ENCODE measurements at regions of chr3 and their contacts with region 1.

Region 1: DNA sequence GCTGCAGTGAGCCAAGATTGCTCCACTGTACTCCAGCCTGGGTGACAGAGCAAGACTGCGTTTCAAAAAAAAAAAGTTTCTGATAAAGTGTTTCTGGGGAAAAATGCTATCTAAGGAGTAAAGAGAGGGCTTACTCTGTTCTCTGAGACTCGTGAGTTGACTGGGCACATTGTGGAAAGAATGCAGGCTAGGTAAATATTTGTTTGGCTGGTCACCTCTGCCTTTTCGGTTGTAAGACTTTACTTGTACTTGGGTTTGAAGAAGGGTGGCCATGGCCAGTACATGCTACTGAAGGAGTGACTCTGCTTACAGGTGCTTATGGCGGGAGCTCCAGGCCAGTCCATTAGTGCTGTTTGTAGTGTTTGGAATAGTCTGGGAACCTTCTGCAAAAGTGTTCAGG is 68.7 kb downstream of the RUBCN start:
- DNase-seq: no peak
- H3K4me3 Mint-ChIP-seq: no peak overlapping the region
- H3K27ac Mint-ChIP-seq: no peak overlapping the region
- H3K4me1 Mint-ChIP-seq: no peaks in the 10 kb centered on the region
- H3K27me3 Mint-ChIP-seq: no peaks in the 10 kb centered on the region

Region 2: GRCh38 chr3:197599089-197599765 is 68.8 kb before region 1 on chr3:
- intact Hi-C with region 1: loop called (anchors 2 kb)
- DNase-seq: peak; percentile 94
- H3K4me3 Mint-ChIP-seq: no peak overlapping the region
- H3K27ac Mint-ChIP-seq: peak overlapping the region; percentile 66
- H3K4me1 Mint-ChIP-seq: peaks cover 14% of the 10 kb centered on the region
- H3K27me3 Mint-ChIP-seq: no peaks in the 10 kb centered on the region

Region 3: GRCh38 chr3:197613199-197613598 is 54.8 kb before region 1 on chr3:
- intact Hi-C with region 1: no loop called
- DNase-seq: peak; percentile 74
- H3K4me3 Mint-ChIP-seq: peak overlapping the region; percentile 27
- H3K27ac Mint-ChIP-seq: peak overlapping the region; percentile 78
- H3K4me1 Mint-ChIP-seq: peaks cover 12% of the 10 kb centered on the region
- H3K27me3 Mint-ChIP-seq: no peaks in the 10 kb centered on the region

Region 4: GRCh38 chr3:198017100-198017499 is 349.1 kb after region 1 on chr3:
- intact Hi-C with region 1: no loop called
- DNase-seq: no peak
- H3K4me3 Mint-ChIP-seq: no peak overlapping the region
- H3K27ac Mint-ChIP-seq: no peak overlapping the region
- H3K4me1 Mint-ChIP-seq: no peaks in the 10 kb centered on the region
- H3K27me3 Mint-ChIP-seq: no peaks in the 10 kb centered on the region

Measured in activated CD4-positive, alpha-beta T cell treated with anti-CD3 and anti-CD28 coated beads, Interleukin-2, amount 10 ng/mL, durations not matched to agents 24 days and 14 days (primary cell).